ENCODE measurements at regions of chr22 and their contacts with region 1.

Region 1: DNA sequence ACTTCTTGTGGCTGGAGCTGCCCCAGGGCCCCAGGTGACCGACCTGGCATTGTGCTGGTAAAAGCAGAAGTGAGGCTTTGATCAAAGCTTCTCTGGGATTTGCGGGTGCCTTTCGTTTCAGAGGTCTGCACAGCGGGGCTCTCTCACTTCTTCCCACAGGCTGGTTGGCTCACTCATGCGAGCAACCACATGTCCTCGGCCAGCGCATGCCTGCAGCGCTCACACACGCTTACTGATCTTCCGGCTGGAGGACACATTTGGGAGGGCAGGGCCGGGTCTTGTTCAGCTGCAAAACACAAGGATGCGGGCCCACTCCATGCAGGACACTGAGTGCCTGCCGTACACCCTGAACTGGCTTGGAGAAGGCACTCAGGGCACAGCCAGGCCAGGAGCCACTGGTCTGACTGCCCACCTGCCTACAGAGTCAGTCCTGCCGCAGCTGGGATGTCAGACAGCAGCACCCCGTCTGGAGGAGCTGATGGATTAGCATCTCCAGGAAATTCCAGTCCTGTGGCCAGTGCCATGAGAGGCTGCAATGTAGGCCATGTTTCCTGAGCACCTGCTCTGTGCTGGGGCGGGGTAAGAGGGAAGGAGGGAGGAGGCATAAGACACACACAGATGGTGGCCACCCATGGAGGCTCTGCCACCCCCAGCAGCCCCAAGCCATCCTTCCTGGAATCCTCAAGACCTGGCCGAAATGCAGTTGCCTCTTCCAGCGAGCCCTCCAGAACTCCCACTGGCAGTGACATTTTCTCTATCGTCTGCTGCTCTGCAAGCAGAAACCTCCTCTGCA is 1383.2 kb downstream of the BRD1 start:
- DNase-seq: peak; percentile 75

Region 2: GRCh38 chr22:49827853-49828598 is 1383.5 kb after region 1 on chr22 and contains the start of gene BRD1:
- intact Hi-C with region 1: loop called in 1 of 2 experiments (anchors 10 kb)
- DNase-seq: no peak
- total RNA-seq, gene BRD1: 20.8 to 21.7 TPM

Measured in posterior vena cava (tissue), 2 donors.